Caco-2 (cell line): ENCODE measurements at regions of chr21 and their contacts with region 1.

Region 1: GRCh38 chr21:34630536-34631143 is 15.7 kb upstream of the RCAN1 start:
- DNase-seq: peak in 1 of 2 experiments; percentile 51
- H3K4me3 ChIP-seq: no peak overlapping the region
- H3K4me3 Mint-ChIP-seq: no peak overlapping the region
- H3K27ac Mint-ChIP-seq: no peak overlapping the region
- H3K4me1 ChIP-seq: no peaks in the 10 kb centered on the region
- H3K4me1 Mint-ChIP-seq: no peaks in the 10 kb centered on the region
- H3K27me3 ChIP-seq: no peaks in the 10 kb centered on the region
- H3K27me3 Mint-ChIP-seq: peaks cover 7% of the 10 kb centered on the region
- CTCF ChIP-seq: peak; percentile 65 to 80

Region 2: GRCh38 chr21:34362136-34362444 is 268.6 kb before region 1 on chr21:
- CTCF ChIA-PET with region 1: interaction called, 8 read pairs
- POLR2A ChIA-PET with region 1: no interaction called
- intact Hi-C with region 1: loop called (anchors 1 kb)
- DNase-seq: no peak
- H3K4me3 ChIP-seq: no peak overlapping the region
- H3K4me3 Mint-ChIP-seq: peak overlapping the region; percentile 46
- H3K27ac Mint-ChIP-seq: no peak overlapping the region
- H3K4me1 ChIP-seq: peaks cover under 1% of the 10 kb centered on the region; the same call in 1 of the 2 replicates
- H3K4me1 Mint-ChIP-seq: peaks cover 7% of the 10 kb centered on the region
- H3K27me3 ChIP-seq: no peaks in the 10 kb centered on the region
- H3K27me3 Mint-ChIP-seq: peaks cover 9% of the 10 kb centered on the region
- CTCF ChIP-seq: no peak

Region 3: DNA sequence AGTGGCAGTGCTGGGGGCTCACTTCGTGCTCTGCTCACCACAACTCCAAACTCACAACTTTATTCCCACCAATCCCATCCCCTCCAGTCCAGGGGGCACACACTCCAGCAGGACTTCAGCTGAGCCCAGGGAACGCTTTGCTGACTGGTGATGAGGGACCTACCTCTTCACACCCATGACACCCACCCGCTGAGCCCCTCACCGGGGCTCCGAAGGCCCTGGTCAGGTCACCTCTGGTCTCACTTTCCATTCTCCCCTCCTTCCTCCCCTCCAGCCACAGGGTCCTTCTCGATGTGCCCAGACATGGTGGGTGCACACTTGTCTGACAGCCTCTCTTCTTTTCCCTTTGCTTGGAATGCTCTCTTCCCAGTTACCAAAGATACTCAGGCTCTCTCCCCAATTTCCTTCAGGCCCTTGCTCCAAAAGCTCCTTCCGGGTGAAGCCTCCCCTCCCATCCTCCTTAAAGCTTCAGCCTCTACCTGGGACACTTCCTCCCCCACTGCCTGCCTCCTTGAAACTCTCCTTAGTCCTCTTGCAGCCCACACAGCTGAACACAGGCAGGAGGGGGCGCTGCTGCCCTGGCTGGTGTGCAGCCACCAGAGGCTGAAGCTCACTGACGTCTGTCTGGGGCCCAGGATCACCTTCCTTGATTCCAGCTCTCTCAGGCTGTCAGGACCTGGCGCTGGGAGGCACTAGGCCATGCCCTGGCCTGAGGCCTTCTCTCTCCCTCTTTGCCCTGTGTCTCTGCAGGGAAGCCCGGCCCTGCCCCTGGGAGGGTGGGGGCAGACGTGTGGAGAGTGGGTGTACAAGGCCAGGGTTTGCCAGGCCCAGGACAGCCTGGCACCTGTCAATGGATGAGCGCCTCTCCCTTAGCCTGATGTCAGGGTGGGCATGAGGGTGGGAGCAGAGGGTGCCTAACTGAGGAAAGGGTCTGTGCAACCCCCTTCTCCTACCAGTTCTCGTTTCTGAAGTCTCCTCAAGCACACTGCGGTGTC is 120.2 kb before region 1 on chr21:
- CTCF ChIA-PET with region 1: no interaction called
- POLR2A ChIA-PET with region 1: no interaction called
- intact Hi-C with region 1: loop called (anchors 1 kb)
- DNase-seq: peak; percentile 72 to 77
- H3K4me3 ChIP-seq: no peak overlapping the region
- H3K4me3 Mint-ChIP-seq: no peak overlapping the region
- H3K27ac Mint-ChIP-seq: peak overlapping the region; percentile 59
- H3K4me1 ChIP-seq: no peaks in the 10 kb centered on the region
- H3K4me1 Mint-ChIP-seq: peaks cover 6% of the 10 kb centered on the region
- H3K27me3 ChIP-seq: no peaks in the 10 kb centered on the region
- H3K27me3 Mint-ChIP-seq: no peaks in the 10 kb centered on the region
- CTCF ChIP-seq: peak; percentile 52 to 79

Region 4: GRCh38 chr21:34582506-34583150 is 48.0 kb before region 1 on chr21:
- CTCF ChIA-PET with region 1: no interaction called
- POLR2A ChIA-PET with region 1: no interaction called
- intact Hi-C with region 1: no loop called
- DNase-seq: peak in 1 of 2 experiments; percentile 27
- H3K4me3 ChIP-seq: no peak overlapping the region
- H3K4me3 Mint-ChIP-seq: no peak overlapping the region
- H3K27ac Mint-ChIP-seq: no peak overlapping the region
- H3K4me1 ChIP-seq: no peaks in the 10 kb centered on the region
- H3K4me1 Mint-ChIP-seq: no peaks in the 10 kb centered on the region
- H3K27me3 ChIP-seq: no peaks in the 10 kb centered on the region
- H3K27me3 Mint-ChIP-seq: no peaks in the 10 kb centered on the region
- CTCF ChIP-seq: peak; percentile 20 to 46

Region 5: DNA sequence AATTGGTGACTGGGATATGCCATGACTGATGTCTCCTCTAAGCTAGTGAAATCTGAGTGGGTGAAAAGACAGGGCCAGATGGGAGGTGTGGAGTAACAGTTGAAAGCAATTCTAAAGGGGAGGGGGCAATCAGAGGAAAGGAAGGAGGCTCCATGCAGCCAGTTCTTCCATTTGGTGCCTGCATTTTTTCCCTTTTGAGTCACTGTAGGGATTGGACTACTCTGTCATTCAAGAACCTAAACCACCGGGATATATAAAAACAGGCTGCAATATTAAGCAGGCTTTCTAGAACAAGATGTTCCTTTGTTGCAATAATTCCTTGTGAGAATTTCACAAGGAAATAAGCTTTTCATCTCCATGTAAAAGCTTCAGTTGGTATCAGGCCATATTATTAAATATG is 56.4 kb after region 1 on chr21:
- CTCF ChIA-PET with region 1: no interaction called
- POLR2A ChIA-PET with region 1: no interaction called
- intact Hi-C with region 1: no loop called
- DNase-seq: no peak
- H3K4me3 ChIP-seq: no peak overlapping the region
- H3K4me3 Mint-ChIP-seq: no peak overlapping the region
- H3K27ac Mint-ChIP-seq: no peak overlapping the region
- H3K4me1 ChIP-seq: no peaks in the 10 kb centered on the region
- H3K4me1 Mint-ChIP-seq: peaks cover 8% of the 10 kb centered on the region
- H3K27me3 ChIP-seq: no peaks in the 10 kb centered on the region
- H3K27me3 Mint-ChIP-seq: no peaks in the 10 kb centered on the region
- CTCF ChIP-seq: no peak

Region 6: DNA sequence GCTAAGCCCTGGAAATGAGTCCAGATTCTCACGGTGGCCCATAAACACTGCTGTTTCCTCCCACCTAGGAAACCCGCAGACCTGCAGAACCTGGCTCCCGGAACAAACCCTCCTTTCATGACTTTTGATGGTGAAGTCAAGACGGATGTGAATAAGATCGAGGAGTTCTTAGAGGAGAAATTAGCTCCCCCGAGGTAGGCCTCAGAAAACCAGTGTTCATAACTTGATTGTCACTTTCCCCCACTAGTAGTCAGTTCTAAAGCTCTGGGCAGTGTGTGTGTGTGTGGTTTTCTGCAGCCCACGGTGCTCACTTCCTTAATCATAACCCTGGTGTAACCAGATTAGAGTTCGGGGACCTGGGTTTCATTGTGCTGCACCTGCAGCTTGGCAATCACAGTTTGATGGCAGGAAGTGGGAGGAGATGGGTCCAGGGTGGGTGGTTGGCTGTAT is 77.3 kb after region 1 on chr21:
- CTCF ChIA-PET with region 1: no interaction called
- POLR2A ChIA-PET with region 1: no interaction called
- intact Hi-C with region 1: no loop called
- DNase-seq: no peak
- H3K4me3 ChIP-seq: no peak overlapping the region
- H3K4me3 Mint-ChIP-seq: no peak overlapping the region
- H3K27ac Mint-ChIP-seq: no peak overlapping the region
- H3K4me1 ChIP-seq: no peaks in the 10 kb centered on the region
- H3K4me1 Mint-ChIP-seq: no peaks in the 10 kb centered on the region
- H3K27me3 ChIP-seq: no peaks in the 10 kb centered on the region
- H3K27me3 Mint-ChIP-seq: no peaks in the 10 kb centered on the region
- CTCF ChIP-seq: no peak

Region 7: DNA sequence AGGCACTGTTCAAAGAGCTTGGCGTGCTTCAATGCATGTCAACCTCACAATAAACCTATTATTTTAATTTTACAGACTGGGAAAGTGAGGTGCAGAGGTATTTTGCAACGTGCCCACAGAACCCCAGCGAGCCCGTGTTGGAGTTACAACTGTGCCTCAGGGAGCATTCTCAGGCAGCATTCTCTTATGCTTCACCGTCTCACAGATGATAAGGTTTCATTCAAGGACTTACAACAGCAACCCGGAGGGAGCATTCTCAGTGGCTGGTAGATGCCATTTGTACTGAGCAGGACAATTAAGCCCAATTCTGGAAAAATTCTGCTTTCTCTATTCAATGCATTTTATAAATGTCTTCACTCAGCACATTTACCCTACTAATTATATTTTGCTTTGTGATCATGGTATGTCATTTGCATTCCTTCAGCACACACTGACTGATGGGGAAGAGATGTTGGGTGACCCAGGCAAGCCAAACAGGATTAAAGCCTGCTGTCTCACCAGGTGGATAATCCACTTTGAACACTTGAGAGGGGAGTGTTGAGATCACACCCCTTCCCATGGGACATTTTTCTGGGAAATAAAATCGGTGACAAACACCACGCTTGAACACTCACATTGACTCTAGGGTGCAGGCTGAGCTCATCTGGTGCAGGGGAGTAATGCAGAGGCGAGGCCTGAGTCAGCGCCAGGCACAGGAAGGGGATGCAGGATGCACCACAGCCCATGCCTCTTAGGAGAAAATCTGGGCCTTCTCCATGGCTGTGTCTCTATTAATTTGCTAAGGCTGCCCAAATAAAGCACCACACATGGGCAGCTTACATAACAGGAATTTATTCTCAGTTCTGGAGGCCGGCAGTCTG is 152.1 kb after region 1 on chr21:
- CTCF ChIA-PET with region 1: no interaction called
- POLR2A ChIA-PET with region 1: no interaction called
- intact Hi-C with region 1: no loop called
- DNase-seq: no peak
- H3K4me3 ChIP-seq: no peak overlapping the region
- H3K4me3 Mint-ChIP-seq: no peak overlapping the region
- H3K27ac Mint-ChIP-seq: no peak overlapping the region
- H3K4me1 ChIP-seq: no peaks in the 10 kb centered on the region
- H3K4me1 Mint-ChIP-seq: peaks cover 5% of the 10 kb centered on the region
- H3K27me3 ChIP-seq: no peaks in the 10 kb centered on the region
- H3K27me3 Mint-ChIP-seq: no peaks in the 10 kb centered on the region
- CTCF ChIP-seq: no peak